ENCODE measurements at regions of chr6 and their contacts with region 1.

Region 1: GRCh38 chr6:31267651-31268368 is 4.1 kb downstream of the HLA-C start:
- DNase-seq: no peak
- H3K4me3 ChIP-seq: no peak overlapping the region
- H3K27ac ChIP-seq: no peak overlapping the region
- H3K4me1 ChIP-seq: peaks cover 0 to 12% (median 9%) of the 10 kb centered on the region in 3 donors
- H3K27me3 ChIP-seq: no peaks in the 10 kb centered on the region
- CTCF ChIP-seq: no peak
- POLR2A ChIP-seq: no peak

Region 2: GRCh38 chr6:31351401-31352309 is 83.8 kb after region 1 on chr6:
- intact Hi-C with region 1: loop called (anchors 5 kb)
- DNase-seq: no peak
- H3K4me3 ChIP-seq: no peak overlapping the region
- H3K27ac ChIP-seq: no peak overlapping the region
- H3K4me1 ChIP-seq: peaks cover 13 to 27% (median 16%) of the 10 kb centered on the region in 3 donors
- H3K27me3 ChIP-seq: no peaks in the 10 kb centered on the region
- CTCF ChIP-seq: no peak
- POLR2A ChIP-seq: no peak